CD4-positive, alpha-beta memory T cell (primary cell): ENCODE measurements at regions of chr18 and their contacts with region 1.

Region 1: GRCh38 chr18:35580701-35581539 is 620 bp upstream of the GALNT1 start:
- DNase-seq: peak; percentile 52 to 69 (median 64)
- H3K4me3 ChIP-seq: peak overlapping the region in 1 of 2 donors; percentile 49
- H3K4me3 Mint-ChIP-seq: peak overlapping the region; percentile 61 to 82 (median 76)
- H3K27ac ChIP-seq: peak overlapping the region; percentile 59
- H3K27ac Mint-ChIP-seq: no peak overlapping the region
- H3K4me1 ChIP-seq: peaks cover 18% of the 10 kb centered on the region
- H3K4me1 Mint-ChIP-seq: peaks cover 18 to 30% (median 20%) of the 10 kb centered on the region in 4 donors
- H3K27me3 ChIP-seq: no peaks in the 10 kb centered on the region
- H3K27me3 Mint-ChIP-seq: peaks cover 2 to 5% of the 10 kb centered on the region in 2 donors

Region 2: GRCh38 chr18:35616664-35617423 is 35.9 kb after region 1 on chr18:
- CTCF ChIA-PET with region 1: no interaction called
- POLR2A ChIA-PET with region 1: interaction called, 15 read pairs
- intact Hi-C with region 1: loop called (anchors 1 kb)
- DNase-seq: peak; percentile 49 to 80 (median 57)
- H3K4me3 ChIP-seq: no peak overlapping the region
- H3K4me3 Mint-ChIP-seq: no peak overlapping the region
- H3K27ac ChIP-seq: no peak overlapping the region
- H3K27ac Mint-ChIP-seq: no peak overlapping the region
- H3K4me1 ChIP-seq: peaks cover 24% of the 10 kb centered on the region
- H3K4me1 Mint-ChIP-seq: peaks cover 8 to 16% (median 13%) of the 10 kb centered on the region in 4 donors
- H3K27me3 ChIP-seq: no peaks in the 10 kb centered on the region
- H3K27me3 Mint-ChIP-seq: no peaks in the 10 kb centered on the region